ENCODE measurements at regions of chr9 and their contacts with region 1.

Region 1: GRCh38 chr9:21465859-21466518 is 16.1 kb downstream of the IFNE start:
- H3K4me3 Mint-ChIP-seq: no peak overlapping the region
- H3K27ac Mint-ChIP-seq: no peak overlapping the region
- H3K4me1 Mint-ChIP-seq: no peaks in the 10 kb centered on the region
- H3K27me3 Mint-ChIP-seq: peaks cover 17% of the 10 kb centered on the region

Region 2: DNA sequence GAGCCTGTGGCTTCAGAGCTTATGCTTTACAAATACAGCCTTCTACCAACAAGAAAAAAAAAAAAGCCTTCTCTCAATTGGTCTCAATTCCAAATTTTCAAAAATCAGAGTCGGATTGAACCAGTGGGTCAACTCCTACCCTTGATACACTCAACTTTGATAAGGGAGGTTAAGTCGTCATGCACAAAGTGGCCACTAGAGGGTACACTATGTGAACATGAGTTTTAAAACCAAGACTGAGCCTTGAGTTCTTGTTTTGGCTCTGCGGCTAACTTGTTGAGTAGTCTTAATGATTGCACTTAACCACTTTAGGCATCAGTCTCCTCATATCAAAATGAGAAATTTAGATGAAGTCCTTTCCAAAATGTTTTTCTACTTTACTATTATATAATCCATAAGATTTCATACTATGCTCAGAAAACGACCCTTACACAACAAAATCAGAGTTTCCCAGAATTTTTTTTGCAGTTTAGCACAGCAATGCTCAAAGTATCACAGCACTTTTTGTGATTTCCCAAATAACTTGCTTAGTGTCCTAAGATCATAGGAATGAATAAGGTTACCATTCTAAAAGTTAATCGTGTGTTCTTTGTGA is 243.6 kb after region 1 on chr9:
- intact Hi-C with region 1: loop called (anchors 10 kb)
- H3K4me3 Mint-ChIP-seq: no peak overlapping the region
- H3K27ac Mint-ChIP-seq: no peak overlapping the region
- H3K4me1 Mint-ChIP-seq: no peaks in the 10 kb centered on the region
- H3K27me3 Mint-ChIP-seq: peaks cover 7% of the 10 kb centered on the region